ENCODE measurements at regions of chr1 and their contacts with region 1.

Region 1: GRCh38 chr1:241706954-241707365 is 54.9 kb downstream of the WDR64 start:
- DNase-seq: peak; percentile 8 to 80 (median 67)
- H3K4me3 ChIP-seq: no peak overlapping the region
- H3K4me3 Mint-ChIP-seq: peak overlapping the region in 6 of 7 donors; percentile 32 to 73 (median 54)
- H3K27ac ChIP-seq: no peak overlapping the region
- H3K27ac Mint-ChIP-seq: peak overlapping the region; percentile 16 to 72 (median 60)
- H3K4me1 ChIP-seq: peaks cover 19% of the 10 kb centered on the region
- H3K4me1 Mint-ChIP-seq: peaks cover 19 to 35% (median 24%) of the 10 kb centered on the region in 3 donors
- H3K27me3 ChIP-seq: no peaks in the 10 kb centered on the region
- H3K27me3 Mint-ChIP-seq: no peaks in the 10 kb centered on the region

Region 2: DNA sequence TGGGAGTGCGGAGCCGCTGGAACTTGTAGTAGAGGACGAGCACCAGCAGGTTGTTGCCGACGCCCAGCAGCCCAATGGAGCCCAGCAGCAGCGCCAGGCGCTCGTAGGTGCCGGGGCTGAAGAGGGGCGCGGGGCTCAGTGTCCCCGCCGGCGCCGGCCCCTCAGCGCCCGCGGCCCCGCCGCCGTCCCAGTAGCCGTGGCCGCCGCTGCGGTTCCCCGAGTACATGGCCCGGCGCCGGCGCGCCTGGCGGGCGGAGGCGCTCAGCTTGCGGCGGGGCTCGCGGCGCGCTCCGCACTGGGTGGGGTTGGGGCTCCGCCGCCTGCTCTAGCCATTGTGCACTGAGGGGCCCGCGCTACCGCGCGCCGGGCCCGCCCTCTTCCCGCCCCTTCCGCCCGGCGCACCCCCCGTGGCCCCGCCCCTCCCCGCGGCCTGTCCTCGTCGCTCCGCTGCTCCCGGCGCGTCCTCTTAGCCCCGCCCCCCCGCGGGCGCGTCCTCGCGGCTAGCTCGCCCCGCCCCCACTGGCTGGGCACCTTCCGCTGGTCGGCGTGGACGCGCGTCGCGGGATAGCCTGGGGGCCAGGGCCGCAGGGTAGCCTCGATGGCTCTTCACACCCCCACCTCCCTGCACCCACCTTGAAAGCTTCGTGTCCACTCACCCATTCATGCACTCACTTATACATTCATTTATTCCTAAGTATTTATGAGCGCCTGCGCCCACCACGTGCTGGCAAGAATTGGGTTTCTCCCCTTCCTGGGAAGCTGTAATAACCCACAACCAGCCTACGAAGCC is 66.7 kb before region 1 on chr1 and contains the starts of genes CHML and OPN3:
- CTCF ChIA-PET with region 1: no interaction called
- POLR2A ChIA-PET with region 1: interaction called, 15 read pairs
- DNase-seq: peak; percentile 85 to 92 (median 85)
- H3K4me3 ChIP-seq: peak within 1 kb of the TSS; percentile 75
- H3K4me3 Mint-ChIP-seq: peak within 1 kb of the TSS; percentile 84 to 94 (median 85)
- H3K27ac ChIP-seq: peak within 1 kb of the TSS; percentile 71
- H3K27ac Mint-ChIP-seq: peak within 1 kb of the TSS; percentile 38 to 94 (median 82)
- H3K4me1 ChIP-seq: peaks cover 33% of the 10 kb centered on the region
- H3K4me1 Mint-ChIP-seq: peaks cover 31 to 44% (median 40%) of the 10 kb centered on the region in 3 donors
- H3K27me3 ChIP-seq: no peaks in the 10 kb centered on the region
- H3K27me3 Mint-ChIP-seq: no peaks in the 10 kb centered on the region
- total RNA-seq, gene CHML: 20.3 to 21.6 TPM
- total RNA-seq, gene OPN3: 6.7 to 7.0 TPM

Region 3: DNA sequence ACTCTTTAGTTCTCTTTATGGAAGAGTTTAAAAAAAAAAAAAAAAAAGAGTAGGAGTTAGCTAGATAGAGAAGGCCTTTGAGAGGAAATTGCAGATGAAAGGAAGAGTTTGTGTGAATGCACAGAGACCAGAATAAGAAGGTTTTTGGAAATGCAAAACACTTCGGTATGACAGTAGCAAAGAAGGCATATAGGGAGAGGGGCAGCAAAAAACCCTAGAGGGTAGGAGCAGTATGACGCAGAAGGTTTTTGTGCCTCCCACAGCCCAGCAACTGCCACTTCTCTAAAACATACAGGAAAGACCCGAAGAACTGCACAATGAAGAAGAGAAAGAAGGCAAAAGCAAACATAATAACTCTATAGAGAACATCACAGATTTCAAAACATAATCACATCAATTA is 29.4 kb after region 1 on chr1:
- CTCF ChIA-PET with region 1: no interaction called
- POLR2A ChIA-PET with region 1: no interaction called
- DNase-seq: no peak
- H3K4me3 ChIP-seq: no peak overlapping the region
- H3K4me3 Mint-ChIP-seq: no peak overlapping the region
- H3K27ac ChIP-seq: no peak overlapping the region
- H3K27ac Mint-ChIP-seq: no peak overlapping the region
- H3K4me1 ChIP-seq: no peaks in the 10 kb centered on the region
- H3K4me1 Mint-ChIP-seq: peaks cover 0 to 4% (median 4%) of the 10 kb centered on the region in 3 donors
- H3K27me3 ChIP-seq: no peaks in the 10 kb centered on the region
- H3K27me3 Mint-ChIP-seq: peaks cover 0 to 3% of the 10 kb centered on the region in 2 donors